ENCODE measurements at regions of chr15 and their contacts with region 1.

Region 1: GRCh38 chr15:74749832-74750231 is 1.2 kb downstream of the CYP1A2 start:
- DNase-seq: no peak
- H3K4me3 ChIP-seq: no peak overlapping the region
- H3K27ac ChIP-seq: no peak overlapping the region
- H3K4me1 ChIP-seq: no peaks in the 10 kb centered on the region
- CTCF ChIP-seq: no peak

Region 2: DNA sequence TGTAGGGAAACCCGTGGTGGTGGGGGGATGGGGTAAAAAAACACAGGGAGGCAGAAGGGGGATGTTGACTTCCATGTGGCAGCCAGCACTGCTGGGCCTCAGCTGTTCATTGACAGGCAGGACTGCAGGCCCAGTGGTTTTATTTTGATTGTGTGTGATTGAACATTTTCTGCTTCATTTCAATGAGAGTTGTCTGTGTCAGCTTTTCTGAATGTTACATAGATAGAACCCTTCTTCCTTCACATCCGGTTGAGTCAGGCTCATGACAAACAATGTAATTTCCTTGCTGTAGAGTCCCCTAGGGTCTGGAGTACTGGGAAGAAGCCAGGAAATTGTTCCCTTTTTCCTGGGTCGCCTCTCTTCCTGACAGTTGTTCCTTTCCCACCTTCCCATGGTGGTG is 215.0 kb after region 1 on chr15:
- CTCF ChIA-PET with region 1: no interaction called
- POLR2A ChIA-PET with region 1: no interaction called
- intact Hi-C with region 1: loop called (anchors 5 kb)
- DNase-seq: no peak
- H3K4me3 ChIP-seq: no peak overlapping the region
- H3K27ac ChIP-seq: no peak overlapping the region
- H3K4me1 ChIP-seq: peaks cover 24% of the 10 kb centered on the region
- CTCF ChIP-seq: no peak